ENCODE measurements at regions of chr20 and their contacts with region 1.

Region 1: DNA sequence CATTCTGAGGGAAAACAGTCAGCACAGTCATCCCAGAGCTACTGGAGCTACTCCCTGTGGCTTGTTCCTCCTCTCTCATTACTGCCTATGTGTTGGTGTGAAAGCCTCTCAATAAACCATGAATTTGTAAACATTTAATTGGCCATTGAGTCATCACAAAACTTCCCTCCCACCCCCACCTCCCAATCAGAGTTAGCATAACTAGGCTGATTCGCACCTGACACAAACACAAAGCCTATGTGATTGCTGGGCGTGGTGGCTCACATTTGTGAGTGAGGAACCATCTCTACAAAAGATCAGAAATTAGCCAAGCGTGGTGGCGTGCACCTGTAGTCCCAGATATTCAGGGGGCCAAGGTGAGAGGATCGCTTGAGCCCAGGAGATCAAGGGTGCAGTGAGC is 17.1 kb upstream of the SNTA1 start:
- DNase-seq: no peak
- H3K4me3 ChIP-seq: no peak overlapping the region
- H3K27ac ChIP-seq: no peak overlapping the region
- H3K4me1 ChIP-seq: peaks cover 0 to 3% (median 0%) of the 10 kb centered on the region in 4 experiments
- H3K27me3 ChIP-seq: no peaks in the 10 kb centered on the region

Region 2: GRCh38 chr20:33653218-33653899 is 192.6 kb after region 1 on chr20:
- CTCF ChIA-PET with region 1: interaction called, 11 read pairs
- POLR2A ChIA-PET with region 1: no interaction called
- DNase-seq: peak; percentile 55 to 77 (median 70)
- H3K4me3 ChIP-seq: no peak overlapping the region
- H3K27ac ChIP-seq: no peak overlapping the region
- H3K4me1 ChIP-seq: peaks cover 0 to 2% (median 0%) of the 10 kb centered on the region in 4 experiments
- H3K27me3 ChIP-seq: no peaks in the 10 kb centered on the region